ENCODE measurements at regions of chr2 and their contacts with region 1.

Region 1: DNA sequence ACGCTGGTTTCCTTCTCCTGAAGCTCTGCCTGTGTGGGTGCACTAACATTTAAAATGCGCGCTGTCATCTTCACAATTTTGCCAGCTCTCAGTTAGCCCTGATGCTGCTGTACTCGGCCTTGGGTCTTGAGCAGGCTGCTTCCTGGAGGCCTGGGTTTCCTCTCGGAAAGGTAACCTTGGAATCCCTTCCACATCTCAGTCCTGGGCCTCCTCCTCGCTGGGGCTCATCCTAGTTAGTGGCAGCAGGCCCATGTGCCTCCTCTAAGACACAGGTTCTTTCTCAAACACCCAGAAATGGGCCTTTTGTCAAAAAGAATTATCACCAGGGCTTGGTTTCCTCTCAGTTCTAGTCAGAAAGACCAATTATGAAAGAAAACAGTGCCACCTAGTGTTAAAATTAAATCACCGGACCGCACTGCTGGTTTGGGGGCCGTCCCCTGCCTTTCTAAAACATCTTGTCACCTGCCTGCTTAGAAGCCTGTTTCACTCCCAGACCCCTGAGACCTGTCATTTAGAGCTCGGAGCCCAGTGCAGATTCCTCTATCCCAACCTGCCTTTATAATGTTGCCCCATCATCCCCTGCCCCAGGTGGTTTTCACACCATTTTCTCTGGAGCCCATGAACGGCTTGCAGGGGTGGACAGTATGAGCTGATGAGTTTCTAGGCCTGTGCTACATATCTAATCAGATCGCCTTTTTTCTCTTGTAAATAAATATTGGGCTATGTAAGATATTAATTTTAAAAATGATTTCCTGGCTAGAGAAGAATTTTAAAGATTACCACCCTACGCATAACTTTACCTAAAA is 42.4 kb downstream of the HK2 start:
- DNase-seq: peak; percentile 76
- CTCF ChIP-seq: peak; percentile 59

Region 2: GRCh38 chr2:74690571-74690970 is 185.7 kb before region 1 on chr2:
- CTCF ChIA-PET with region 1: interaction called, 25 read pairs
- POLR2A ChIA-PET with region 1: no interaction called
- DNase-seq: peak; percentile 68
- CTCF ChIP-seq: peak; percentile 75

Region 3: DNA sequence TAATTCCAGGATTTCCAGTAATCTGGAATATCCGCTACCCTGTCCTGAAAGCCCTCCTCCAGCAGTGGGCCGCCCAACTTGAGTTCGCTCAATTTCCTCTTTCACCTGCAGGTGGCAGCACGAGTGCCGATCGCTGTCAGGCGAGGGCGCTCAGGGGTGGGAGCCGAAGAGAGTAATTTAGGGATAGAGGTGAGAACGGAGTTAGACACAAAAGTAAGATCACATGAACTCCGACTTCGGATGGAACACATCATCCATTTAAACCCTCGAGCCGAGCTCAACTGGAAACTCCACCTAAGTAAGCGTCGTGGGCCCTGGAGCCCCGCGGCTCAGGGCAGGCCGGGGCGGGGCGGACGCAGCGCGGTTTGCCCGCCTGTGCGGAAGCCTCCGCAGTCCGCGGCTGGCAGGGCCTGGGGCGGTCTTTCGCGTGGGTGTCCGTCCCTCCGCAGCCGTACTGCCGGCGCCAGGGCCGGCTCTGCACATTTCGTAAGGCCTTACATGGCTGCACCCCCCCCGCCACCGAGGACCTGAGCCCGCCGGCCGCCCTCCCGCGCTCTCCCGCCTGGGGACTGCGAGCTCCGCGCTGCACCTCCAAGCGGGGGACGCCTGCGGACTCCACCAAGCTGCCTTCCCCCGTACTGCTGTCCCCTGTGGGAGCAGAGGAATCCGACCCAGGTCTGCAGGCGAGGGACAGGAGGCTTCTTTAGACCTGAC is 161.0 kb before region 1 on chr2:
- CTCF ChIA-PET with region 1: interaction called, 114 read pairs
- POLR2A ChIA-PET with region 1: no interaction called
- DNase-seq: peak; percentile 87
- CTCF ChIP-seq: peak; percentile 97

Region 4: GRCh38 chr2:74789271-74789670 is 87.0 kb before region 1 on chr2:
- CTCF ChIA-PET with region 1: no interaction called
- POLR2A ChIA-PET with region 1: no interaction called
- DNase-seq: no peak
- CTCF ChIP-seq: no peak

Region 5: GRCh38 chr2:74833418-74834233 is 42.7 kb before region 1 on chr2 and contains the start of gene HK2:
- CTCF ChIA-PET with region 1: interaction called, 10 read pairs
- POLR2A ChIA-PET with region 1: no interaction called
- DNase-seq: peak; percentile 99
- CTCF ChIP-seq: no peak

Region 6: GRCh38 chr2:74845217-74846011 is 30.9 kb before region 1 on chr2:
- CTCF ChIA-PET with region 1: interaction called, 17 read pairs
- POLR2A ChIA-PET with region 1: no interaction called
- DNase-seq: no peak
- CTCF ChIP-seq: no peak

Region 7: GRCh38 chr2:74864846-74865722 is 11.2 kb before region 1 on chr2:
- CTCF ChIA-PET with region 1: interaction called, 39 read pairs
- POLR2A ChIA-PET with region 1: no interaction called
- DNase-seq: no peak
- CTCF ChIP-seq: no peak

Region 8: GRCh38 chr2:74887445-74887951 is 11.2 kb after region 1 on chr2:
- CTCF ChIA-PET with region 1: interaction called, 47 read pairs
- POLR2A ChIA-PET with region 1: no interaction called
- DNase-seq: no peak
- CTCF ChIP-seq: no peak